ENCODE measurements at regions of chr6 and their contacts with region 1.

Region 1: DNA sequence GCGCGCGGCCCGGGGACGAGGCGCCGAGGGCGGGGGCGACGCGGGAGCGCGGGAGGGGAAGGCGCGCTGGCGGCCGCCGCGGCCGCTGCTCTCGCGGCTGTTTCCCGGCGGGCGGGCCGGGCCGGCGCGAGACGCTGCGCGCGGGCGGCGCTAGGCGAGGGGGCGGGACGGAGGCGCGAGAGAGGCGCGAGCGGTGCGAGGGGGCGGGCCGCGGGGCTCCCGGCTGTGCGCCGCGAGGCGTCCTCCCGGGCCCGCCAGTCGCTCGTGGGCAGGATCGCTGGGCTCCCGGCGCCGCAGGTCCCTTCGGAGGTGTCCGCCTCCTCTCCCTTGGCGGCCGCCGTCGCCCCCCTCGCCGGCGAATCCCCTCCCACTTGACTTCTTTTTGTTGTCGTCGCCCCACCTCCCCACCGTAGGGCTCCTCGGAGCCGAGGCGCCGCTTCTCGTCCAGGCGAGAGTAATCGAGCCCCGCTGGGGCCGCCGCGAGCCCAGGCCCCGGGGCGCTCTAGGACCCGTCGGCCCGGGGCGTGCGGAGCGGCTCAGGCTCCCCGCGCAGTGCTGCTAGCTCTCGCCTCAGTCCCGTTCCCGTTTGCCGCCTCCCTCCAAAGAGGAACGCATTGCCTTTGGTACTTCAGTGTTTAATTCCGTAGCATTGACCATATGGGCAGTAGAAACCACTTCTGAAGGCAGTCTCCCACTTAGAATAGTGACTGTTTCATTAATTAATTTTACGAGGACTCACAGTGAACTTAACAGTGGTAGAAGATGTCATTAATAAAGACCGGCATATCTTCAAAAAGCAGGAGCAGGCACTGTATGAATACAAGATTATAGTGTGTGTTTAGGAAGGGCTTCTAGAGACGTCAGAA is at the start of gene RANBP9:
- DNase-seq: peak; percentile 93 to 95
- ATAC-seq: peak; percentile 96
- H3K4me3 ChIP-seq: peak within 1 kb of the TSS; percentile 96 to 99
- H3K27ac ChIP-seq: peak within 1 kb of the TSS; percentile 77 to 90
- H3K4me1 ChIP-seq: no peaks in the 10 kb centered on the region
- H3K27me3 ChIP-seq: no peaks in the 10 kb centered on the region
- total RNA-seq, gene RANBP9: 53.2 to 64.5 TPM

Region 2: DNA sequence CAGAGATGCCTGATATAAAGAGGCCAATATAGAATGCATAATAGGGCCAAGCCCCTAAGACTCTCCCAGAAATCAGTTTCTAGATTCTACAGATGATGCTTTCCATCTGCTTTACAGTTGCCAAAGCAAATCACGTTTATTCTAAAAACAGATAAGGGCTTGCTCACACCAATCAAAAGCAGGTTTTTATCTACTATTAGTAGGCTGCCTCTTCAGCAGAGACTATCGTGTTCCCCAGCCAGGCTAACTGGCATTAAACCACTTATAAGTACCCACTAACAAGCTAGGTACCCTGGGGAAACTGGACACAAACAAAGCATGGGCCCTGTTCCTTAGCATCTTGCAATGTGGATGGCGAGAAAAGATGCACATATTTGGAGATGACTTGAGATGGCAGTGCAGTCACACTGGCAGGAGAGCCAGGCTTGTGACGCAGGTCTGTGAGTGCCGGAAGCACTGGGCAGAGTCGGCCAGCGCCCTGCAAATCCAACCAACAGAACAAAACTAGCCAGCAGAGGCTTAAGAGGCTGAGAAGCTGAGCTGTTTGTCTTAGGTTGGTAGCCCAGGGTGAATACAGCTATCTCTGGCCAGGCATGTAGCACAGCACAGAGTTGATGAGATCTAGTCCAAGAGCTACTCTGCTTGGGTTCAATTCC is 297.9 kb before region 1 on chr6:
- intact Hi-C with region 1: loop called in 1 of 2 experiments (anchors 5 kb)
- DNase-seq: peak; percentile 74 to 87
- ATAC-seq: peak; percentile 86
- H3K4me3 ChIP-seq: no peak overlapping the region
- H3K27ac ChIP-seq: peak overlapping the region; percentile 77 to 99
- H3K4me1 ChIP-seq: peaks cover 0 to 9% of the 10 kb centered on the region in 2 donors
- H3K27me3 ChIP-seq: no peaks in the 10 kb centered on the region

Region 3: DNA sequence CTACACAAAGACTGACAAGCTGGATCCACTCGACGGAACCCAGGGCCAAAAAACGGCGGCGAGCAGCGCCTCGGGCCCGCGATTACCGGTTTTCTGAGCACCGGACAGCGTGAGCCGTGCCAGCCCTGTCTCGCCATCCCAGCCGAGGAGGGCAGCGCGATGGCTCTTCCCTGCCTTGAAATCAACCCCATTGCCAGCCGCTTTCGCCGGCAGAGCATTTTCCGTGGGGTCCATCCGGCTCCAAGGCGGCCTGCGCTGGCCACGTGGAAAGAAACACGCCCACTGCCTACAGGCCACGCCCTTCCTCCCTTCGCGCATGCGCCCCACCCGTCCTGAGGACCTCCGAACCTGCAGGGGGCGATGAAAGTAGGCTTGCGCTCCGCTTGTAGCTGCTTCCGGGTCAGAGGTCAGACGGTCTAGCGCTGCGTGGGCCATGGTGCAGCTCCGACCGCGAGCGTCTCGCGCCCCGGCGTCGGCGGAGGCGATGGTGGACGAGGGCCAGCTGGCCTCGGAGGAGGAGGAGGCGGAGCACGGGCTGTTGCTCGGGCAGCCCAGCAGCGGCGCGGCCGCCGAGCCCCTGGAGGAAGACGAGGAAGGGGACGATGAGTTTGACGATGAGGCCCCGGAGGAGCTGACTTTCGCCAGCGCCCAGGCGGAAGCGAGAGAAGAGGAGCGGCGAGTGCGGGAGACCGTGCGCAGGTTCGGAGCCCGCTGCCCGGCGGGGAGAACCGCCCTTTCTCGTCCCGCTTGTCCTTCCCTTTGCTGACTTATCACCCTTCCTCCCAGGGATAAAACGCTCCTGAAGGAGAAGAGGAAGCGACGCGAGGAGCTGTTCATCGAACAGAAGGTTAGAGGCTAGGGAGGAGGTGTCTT is 96.8 kb before region 1 on chr6 and contains the start of gene NOL7:
- intact Hi-C with region 1: loop called (anchors 1 to 5 kb)
- DNase-seq: peak; percentile 98 to 99
- ATAC-seq: peak; percentile 99
- H3K4me3 ChIP-seq: peak within 1 kb of the TSS; percentile 55 to 74
- H3K27ac ChIP-seq: peak within 1 kb of the TSS; percentile 78 to 80
- H3K4me1 ChIP-seq: peaks cover 0 to 3% of the 10 kb centered on the region in 2 donors
- H3K27me3 ChIP-seq: no peaks in the 10 kb centered on the region
- total RNA-seq, gene NOL7: 47.4 to 54.0 TPM

Region 4: DNA sequence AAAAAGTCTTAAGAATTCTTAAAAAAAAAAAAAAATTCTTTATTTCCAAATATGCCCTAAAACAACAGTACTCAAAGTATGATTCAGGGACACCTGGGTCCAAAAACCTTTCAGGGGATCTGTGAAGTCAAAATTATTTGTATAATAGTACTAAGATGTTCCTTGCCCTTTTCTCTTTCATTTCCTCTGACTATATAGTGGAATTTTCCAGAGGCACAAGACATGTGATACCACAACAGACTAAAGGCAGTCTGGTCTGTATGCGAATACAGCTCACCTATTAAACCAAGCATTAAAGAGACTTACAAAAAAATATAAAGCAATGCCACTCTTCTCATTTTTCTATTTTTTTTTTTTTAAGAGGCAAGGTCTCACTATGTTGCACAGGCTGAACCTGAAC is 81.5 kb before region 1 on chr6:
- intact Hi-C with region 1: loop called in 1 of 2 experiments (anchors 5 kb)
- DNase-seq: no peak
- ATAC-seq: no peak
- H3K4me3 ChIP-seq: no peak overlapping the region
- H3K27ac ChIP-seq: no peak overlapping the region
- H3K4me1 ChIP-seq: peaks cover 0 to 3% of the 10 kb centered on the region in 2 donors
- H3K27me3 ChIP-seq: no peaks in the 10 kb centered on the region

Region 5: DNA sequence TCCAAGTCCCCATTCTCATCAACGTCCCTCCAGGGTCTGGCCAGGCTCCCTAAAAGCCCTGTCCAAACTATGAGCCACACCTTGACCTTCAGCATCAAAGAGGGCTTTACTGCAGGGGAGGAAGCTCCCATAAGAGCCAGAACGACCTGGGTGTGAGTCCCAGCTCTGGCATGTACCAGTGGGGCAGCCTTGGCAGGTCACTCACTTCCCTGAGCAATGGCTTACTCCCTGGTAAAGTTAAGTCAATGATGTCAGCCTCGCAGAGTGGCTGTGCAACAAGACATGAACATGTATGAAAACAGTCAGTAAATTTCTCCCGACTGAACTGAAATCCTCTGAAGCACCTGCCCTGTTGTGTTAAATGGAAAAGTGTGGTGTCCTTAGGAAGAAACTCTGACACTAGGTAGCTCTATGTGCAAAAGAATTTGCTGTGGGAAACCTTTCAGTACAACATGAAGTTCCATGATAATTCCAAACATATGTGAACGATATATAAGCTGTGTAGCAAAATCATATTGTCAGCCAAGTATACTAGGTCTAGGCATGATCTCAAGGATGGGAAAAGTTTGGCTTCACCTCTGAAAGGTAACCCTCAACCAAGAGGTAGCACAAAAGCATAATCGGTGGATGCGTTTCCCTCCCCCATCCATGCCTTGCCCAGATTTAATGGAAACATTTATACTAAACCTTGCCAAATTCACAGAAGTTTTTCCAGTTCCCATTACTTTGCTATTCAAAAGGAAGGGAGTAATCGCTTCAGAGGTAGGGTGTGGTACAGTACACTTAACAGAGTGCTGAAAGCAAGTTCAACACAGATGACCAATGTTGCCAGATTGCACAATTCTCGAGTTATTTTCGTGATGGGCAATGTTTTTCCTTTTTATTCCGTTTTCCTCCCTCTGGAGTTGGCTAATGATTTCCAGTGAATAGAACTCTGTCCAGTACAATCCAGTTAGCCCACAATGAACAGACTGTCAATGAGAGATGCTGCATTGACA is 48.6 kb after region 1 on chr6:
- intact Hi-C with region 1: loop called (anchors 2 to 5 kb)
- DNase-seq: no peak
- ATAC-seq: peak; percentile 87
- H3K4me3 ChIP-seq: no peak overlapping the region
- H3K27ac ChIP-seq: peak overlapping the region in 1 of 2 donors; percentile 34
- H3K4me1 ChIP-seq: peaks cover 1 to 5% of the 10 kb centered on the region in 2 donors
- H3K27me3 ChIP-seq: no peaks in the 10 kb centered on the region

Region 6: DNA sequence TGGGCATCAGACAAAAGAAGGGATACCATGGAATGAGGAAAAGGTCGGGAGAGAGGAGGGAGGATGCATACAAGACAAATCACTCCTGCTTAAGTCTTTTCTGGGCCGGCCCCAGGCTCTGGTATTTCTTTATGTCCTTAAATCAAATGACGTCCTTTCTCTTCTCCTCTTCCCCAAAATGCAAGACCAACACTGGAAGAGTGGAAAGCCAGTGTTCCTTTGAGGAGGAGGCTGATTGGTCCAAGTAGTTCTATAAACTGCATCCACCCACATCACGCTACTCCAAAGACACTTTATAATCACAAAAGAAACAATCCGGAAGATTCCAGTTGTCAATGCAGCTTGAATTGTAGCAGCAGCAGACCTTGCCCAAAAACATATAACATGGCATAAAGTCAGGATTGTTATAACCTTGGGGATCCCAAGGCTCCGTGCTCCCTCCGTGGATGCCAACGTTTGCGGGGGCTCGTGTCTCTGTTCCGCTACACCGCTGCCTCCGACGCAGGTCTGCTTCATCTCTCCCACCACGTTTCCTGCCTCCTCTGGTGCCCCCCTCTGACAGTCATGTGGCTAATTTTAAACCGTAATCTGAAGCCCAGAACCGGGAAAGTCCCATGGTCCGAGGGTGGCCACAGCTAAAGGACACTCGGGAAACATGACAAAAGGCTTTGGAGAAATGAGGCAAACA is 55.3 kb after region 1 on chr6:
- intact Hi-C with region 1: loop called in 1 of 2 experiments (anchors 5 kb)
- DNase-seq: peak; percentile 70 to 80
- ATAC-seq: peak; percentile 85
- H3K4me3 ChIP-seq: peak overlapping the region in 1 of 2 donors; percentile 42
- H3K27ac ChIP-seq: no peak overlapping the region
- H3K4me1 ChIP-seq: peaks cover 0 to 1% of the 10 kb centered on the region in 2 donors
- H3K27me3 ChIP-seq: no peaks in the 10 kb centered on the region

Region 7: DNA sequence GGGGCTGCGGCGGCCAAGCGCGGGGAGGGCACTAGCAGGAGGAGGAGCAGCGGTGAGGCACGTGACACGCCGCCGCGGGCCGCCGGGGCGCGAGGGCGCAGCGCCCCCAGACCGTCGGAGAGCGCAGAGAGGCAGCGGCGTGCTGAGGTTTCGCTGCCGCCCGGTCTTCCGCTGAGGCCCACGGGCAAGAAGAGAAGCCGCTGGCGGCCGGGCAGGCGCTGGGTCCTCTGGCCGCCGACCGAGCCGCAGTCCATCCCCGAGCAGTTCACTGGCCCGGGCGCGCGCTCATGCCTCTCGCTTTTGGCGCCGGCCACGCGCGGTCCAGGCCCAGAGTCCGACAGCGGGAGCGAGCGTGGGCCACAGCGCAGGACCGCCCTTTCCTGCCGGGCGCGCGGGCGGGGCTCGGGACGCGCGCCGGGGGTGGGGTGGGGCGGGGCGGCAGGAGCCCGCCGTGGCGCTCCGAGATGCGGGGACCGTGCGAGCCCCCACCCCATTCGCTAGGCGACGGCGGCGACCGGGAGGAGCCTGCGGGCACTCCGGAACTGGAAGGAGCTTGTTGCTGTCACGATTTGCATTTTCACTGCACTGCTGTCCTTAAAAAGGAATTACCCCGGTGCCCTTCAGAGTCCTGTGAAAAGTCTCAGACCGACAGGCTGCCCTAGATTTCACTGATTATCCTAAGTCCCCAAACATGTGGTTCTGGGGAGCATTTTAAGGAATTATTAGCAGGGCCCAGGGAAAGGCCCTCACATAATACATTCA is 102.4 kb after region 1 on chr6 and contains the start of gene MCUR1:
- intact Hi-C with region 1: loop called in 1 of 2 experiments (anchors 5 kb)
- DNase-seq: peak; percentile 93 to 94
- ATAC-seq: peak; percentile 97
- H3K4me3 ChIP-seq: peak within 1 kb of the TSS; percentile 52 to 86
- H3K27ac ChIP-seq: peak within 1 kb of the TSS; percentile 65 to 95
- H3K4me1 ChIP-seq: peaks cover 0 to 2% of the 10 kb centered on the region in 2 donors
- H3K27me3 ChIP-seq: no peaks in the 10 kb centered on the region
- total RNA-seq, gene MCUR1: 17.3 to 19.3 TPM